B cell (primary cell): ENCODE measurements at regions of chr6 and their contacts with region 1.

Region 1: GRCh38 chr6:150641398-150642139 is 41.9 kb downstream of the PLEKHG1 start:
- DNase-seq: peak; percentile 86
- ATAC-seq: peak; percentile 68
- H3K4me3 ChIP-seq: peak overlapping the region; percentile 11 to 58 (median 41)
- H3K4me3 Mint-ChIP-seq: peak overlapping the region; percentile 90
- H3K27ac ChIP-seq: peak overlapping the region; percentile 72 to 90
- H3K27ac Mint-ChIP-seq: peak overlapping the region; percentile 90
- H3K4me1 ChIP-seq: peaks cover 54 to 80% of the 10 kb centered on the region in 2 donors
- H3K4me1 Mint-ChIP-seq: peaks cover 86% of the 10 kb centered on the region
- H3K27me3 ChIP-seq: no peaks in the 10 kb centered on the region
- H3K27me3 Mint-ChIP-seq: no peaks in the 10 kb centered on the region
- CTCF ChIP-seq: no peak

Region 2: GRCh38 chr6:150622941-150623874 is 18.4 kb before region 1 on chr6:
- CTCF ChIA-PET with region 1: interaction called, 24 read pairs
- POLR2A ChIA-PET with region 1: interaction called, 6 read pairs
- intact Hi-C with region 1: loop called (anchors 1 kb)
- DNase-seq: peak; percentile 95
- ATAC-seq: peak; percentile 85
- H3K4me3 ChIP-seq: peak overlapping the region in 2 of 5 experiments; percentile 18 to 37
- H3K4me3 Mint-ChIP-seq: peak overlapping the region; percentile 9
- H3K27ac ChIP-seq: peak overlapping the region; percentile 96
- H3K27ac Mint-ChIP-seq: peak overlapping the region; percentile 94
- H3K4me1 ChIP-seq: peaks cover 93 to 94% of the 10 kb centered on the region in 2 donors
- H3K4me1 Mint-ChIP-seq: peaks cover 90% of the 10 kb centered on the region
- H3K27me3 ChIP-seq: no peaks in the 10 kb centered on the region
- H3K27me3 Mint-ChIP-seq: no peaks in the 10 kb centered on the region
- CTCF ChIP-seq: no peak

Region 3: DNA sequence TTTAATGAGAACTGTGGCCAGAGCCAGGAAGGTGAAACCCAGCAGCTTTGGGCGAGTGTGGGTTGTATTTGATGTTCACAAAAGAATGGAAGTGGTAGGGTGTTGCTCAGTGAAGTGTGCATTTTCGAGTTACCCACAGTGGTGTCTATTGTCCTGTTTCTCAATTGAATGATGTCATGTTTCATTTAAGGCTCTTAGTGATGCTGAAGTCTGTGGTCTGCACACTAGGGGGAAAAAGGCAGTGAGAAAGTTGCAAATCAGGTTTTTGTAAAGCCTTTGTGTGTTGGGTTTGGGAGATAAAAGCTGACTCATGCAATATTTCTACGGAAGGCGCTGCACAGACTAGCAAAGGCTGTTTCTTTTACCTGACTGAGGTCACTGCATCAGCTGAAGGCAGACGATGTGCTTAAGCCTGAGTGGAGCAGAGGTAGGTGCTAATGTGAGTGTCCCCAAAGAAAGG is 79.2 kb after region 1 on chr6:
- CTCF ChIA-PET with region 1: no interaction called
- POLR2A ChIA-PET with region 1: no interaction called
- intact Hi-C with region 1: loop called (anchors 2 kb)
- DNase-seq: peak; percentile 77
- ATAC-seq: peak; percentile 93
- H3K4me3 ChIP-seq: no peak overlapping the region
- H3K4me3 Mint-ChIP-seq: peak overlapping the region; percentile 40
- H3K27ac ChIP-seq: peak overlapping the region in 1 of 2 donors; percentile 56
- H3K27ac Mint-ChIP-seq: peak overlapping the region; percentile 54
- H3K4me1 ChIP-seq: peaks cover 43 to 53% of the 10 kb centered on the region in 2 donors
- H3K4me1 Mint-ChIP-seq: peaks cover 75% of the 10 kb centered on the region
- H3K27me3 ChIP-seq: no peaks in the 10 kb centered on the region
- H3K27me3 Mint-ChIP-seq: no peaks in the 10 kb centered on the region
- CTCF ChIP-seq: peak; percentile 52